ENCODE measurements at regions of chrX and their contacts with region 1.

Region 1: GRCh38 chrX:37926700-37927099 is 79.3 kb upstream of the DYNLT3 start:
- DNase-seq: no peak
- H3K4me3 Mint-ChIP-seq: no peak overlapping the region
- H3K27ac Mint-ChIP-seq: no peak overlapping the region
- H3K4me1 Mint-ChIP-seq: peaks cover 4% of the 10 kb centered on the region
- H3K27me3 Mint-ChIP-seq: no peaks in the 10 kb centered on the region

Region 2: GRCh38 chrX:37314536-37314935 is 612.2 kb before region 1 on chrX:
- intact Hi-C with region 1: no loop called
- DNase-seq: no peak
- H3K4me3 Mint-ChIP-seq: no peak overlapping the region
- H3K27ac Mint-ChIP-seq: no peak overlapping the region
- H3K4me1 Mint-ChIP-seq: no peaks in the 10 kb centered on the region
- H3K27me3 Mint-ChIP-seq: no peaks in the 10 kb centered on the region

Region 3: GRCh38 chrX:38166478-38167083 is 239.9 kb after region 1 on chrX:
- intact Hi-C with region 1: loop called (anchors 2 kb)
- DNase-seq: peak; percentile 64
- H3K4me3 Mint-ChIP-seq: no peak overlapping the region
- H3K27ac Mint-ChIP-seq: no peak overlapping the region
- H3K4me1 Mint-ChIP-seq: no peaks in the 10 kb centered on the region
- H3K27me3 Mint-ChIP-seq: peaks cover 5% of the 10 kb centered on the region

Region 4: DNA sequence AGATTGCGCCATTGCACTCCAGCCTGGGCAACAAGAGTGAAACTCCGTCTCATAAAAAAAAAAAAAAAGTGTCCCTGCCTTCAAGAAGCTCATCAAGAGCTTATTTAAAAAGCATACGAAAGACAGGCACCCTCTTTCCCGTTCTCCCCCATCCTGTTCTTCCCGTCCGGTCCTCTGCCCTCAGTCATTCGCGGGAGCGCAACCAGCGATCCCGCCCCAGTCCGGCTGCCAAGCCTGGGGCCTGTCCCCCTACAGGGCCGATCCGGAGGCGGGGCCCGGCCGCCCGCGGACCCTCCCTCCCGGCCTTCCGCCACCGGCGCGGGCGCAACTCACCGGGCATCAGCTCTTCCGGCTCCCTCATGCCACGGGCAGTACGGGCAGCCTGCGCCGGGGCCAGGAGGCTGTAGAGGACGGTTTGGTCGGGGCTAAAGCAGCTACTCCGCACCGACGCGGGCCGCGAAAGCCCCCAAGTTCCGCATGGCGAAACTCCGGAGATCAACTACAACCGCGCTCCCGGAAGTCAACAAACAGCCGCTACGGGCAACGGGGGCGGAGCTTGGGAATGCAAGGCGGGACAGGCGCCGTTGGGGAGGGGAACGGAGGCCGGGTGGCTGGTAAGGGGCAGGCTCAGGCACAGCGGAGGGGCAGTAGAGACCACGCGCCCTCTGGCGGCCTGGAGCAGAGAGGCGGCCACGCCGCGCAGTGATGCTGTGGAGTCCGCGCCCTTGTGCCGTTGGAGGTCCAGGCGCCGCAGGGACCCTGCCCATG is 400.5 kb after region 1 on chrX and contains the start of gene RPGR:
- intact Hi-C with region 1: loop called (anchors 2 kb)
- DNase-seq: peak; percentile 97
- H3K4me3 Mint-ChIP-seq: peak within 1 kb of the TSS; percentile 90
- H3K27ac Mint-ChIP-seq: peak within 1 kb of the TSS; percentile 97
- H3K4me1 Mint-ChIP-seq: peaks cover 14% of the 10 kb centered on the region
- H3K27me3 Mint-ChIP-seq: no peaks in the 10 kb centered on the region
- total RNA-seq, gene RPGR: 7.7 and 8.6 TPM in 2 replicates